ENCODE measurements at regions of chr9 and their contacts with region 1.

Region 1: GRCh38 chr9:6827439-6827838 is 69.7 kb downstream of the KDM4C start:
- DNase-seq: peak; percentile 54
- ATAC-seq: peak; percentile 86
- H3K4me3 ChIP-seq: no peak overlapping the region
- H3K27ac ChIP-seq: no peak overlapping the region
- H3K4me1 ChIP-seq: no peaks in the 10 kb centered on the region
- H3K27me3 ChIP-seq: no peaks in the 10 kb centered on the region
- CTCF ChIP-seq: peak; percentile 76
- POLR2A ChIP-seq: no peak
- RAD21 ChIP-seq: peak; percentile 74

Region 2: DNA sequence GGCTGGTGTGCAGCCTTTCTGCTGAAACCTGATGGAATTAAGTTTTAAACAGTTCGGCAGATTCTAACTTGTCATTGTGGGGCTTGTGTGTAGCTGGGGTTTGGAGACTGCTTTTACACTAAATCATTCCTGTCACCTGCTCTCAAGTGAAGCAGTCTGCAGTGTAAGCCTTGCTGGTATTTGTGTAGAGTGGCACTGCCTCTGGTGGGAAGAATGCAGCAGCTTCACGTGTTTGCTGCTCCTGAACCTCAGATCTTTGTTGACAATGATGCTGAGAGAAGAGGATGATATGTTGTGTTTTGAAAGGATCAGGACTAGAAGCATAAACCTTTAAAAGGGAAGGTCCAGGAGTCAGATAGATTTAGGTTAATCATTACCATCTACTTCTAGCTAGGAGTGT is 18.4 kb after region 1 on chr9:
- CTCF ChIA-PET with region 1: interaction called, 10 read pairs
- POLR2A ChIA-PET with region 1: no interaction called
- dilution Hi-C with region 1: no loop called
- in situ Hi-C with region 1: no loop called
- intact Hi-C with region 1: no loop called
- DNase-seq: peak; percentile 27
- ATAC-seq: peak; percentile 53
- H3K4me3 ChIP-seq: no peak overlapping the region
- H3K27ac ChIP-seq: no peak overlapping the region
- H3K4me1 ChIP-seq: no peaks in the 10 kb centered on the region
- H3K27me3 ChIP-seq: no peaks in the 10 kb centered on the region
- CTCF ChIP-seq: peak; percentile 40
- POLR2A ChIP-seq: no peak
- RAD21 ChIP-seq: peak; percentile 24

Measured in IMR-90 (cell line).